Ascending aorta (tissue), 2 donors: ENCODE measurements at regions of chr3 and their contacts with region 1.

Region 1: GRCh38 chr3:24220859-24221657 is 273.6 kb downstream of the THRB start:
- DNase-seq: peak; percentile 24 to 91
- H3K4me3 ChIP-seq: no peak overlapping the region
- H3K27ac ChIP-seq: peak overlapping the region; percentile 82 to 84
- H3K4me1 ChIP-seq: peaks cover 12 to 64% of the 10 kb centered on the region in 2 donors
- H3K27me3 ChIP-seq: no peaks in the 10 kb centered on the region
- CTCF ChIP-seq: no peak

Region 2: GRCh38 chr3:24119321-24119751 is 101.7 kb before region 1 on chr3:
- intact Hi-C with region 1: no loop called
- DNase-seq: no peak
- H3K4me3 ChIP-seq: no peak overlapping the region
- H3K27ac ChIP-seq: peak overlapping the region in 1 of 2 donors; percentile 26
- H3K4me1 ChIP-seq: peaks cover 0 to 14% of the 10 kb centered on the region in 2 donors
- H3K27me3 ChIP-seq: no peaks in the 10 kb centered on the region
- CTCF ChIP-seq: no peak

Region 3: GRCh38 chr3:24145981-24146822 is 74.9 kb before region 1 on chr3:
- intact Hi-C with region 1: loop called (anchors 5 kb)
- DNase-seq: peak in 1 of 2 donors; percentile 79
- H3K4me3 ChIP-seq: peak overlapping the region in 1 of 2 donors; percentile 31
- H3K27ac ChIP-seq: peak overlapping the region; percentile 76 to 81
- H3K4me1 ChIP-seq: peaks cover 0 to 27% of the 10 kb centered on the region in 2 donors
- H3K27me3 ChIP-seq: no peaks in the 10 kb centered on the region
- CTCF ChIP-seq: no peak

Region 4: GRCh38 chr3:25396686-25397085 is 1175.6 kb after region 1 on chr3:
- intact Hi-C with region 1: no loop called
- DNase-seq: no peak
- H3K4me3 ChIP-seq: no peak overlapping the region
- H3K27ac ChIP-seq: no peak overlapping the region
- H3K4me1 ChIP-seq: no peaks in the 10 kb centered on the region
- H3K27me3 ChIP-seq: no peaks in the 10 kb centered on the region
- CTCF ChIP-seq: no peak